ENCODE measurements at regions of chr11 and their contacts with region 1.

Region 1: GRCh38 chr11:15300341-15300740 is 185.6 kb downstream of the INSC start:
- DNase-seq: no peak
- H3K4me3 ChIP-seq: no peak overlapping the region
- H3K27ac ChIP-seq: no peak overlapping the region
- H3K4me1 ChIP-seq: no peaks in the 10 kb centered on the region
- H3K27me3 ChIP-seq: no peaks in the 10 kb centered on the region
- CTCF ChIP-seq: no peak
- POLR2A ChIP-seq: no peak

Region 2: GRCh38 chr11:15199693-15200092 is 100.6 kb before region 1 on chr11:
- intact Hi-C with region 1: no loop called
- DNase-seq: no peak
- H3K4me3 ChIP-seq: no peak overlapping the region
- H3K27ac ChIP-seq: no peak overlapping the region
- H3K4me1 ChIP-seq: no peaks in the 10 kb centered on the region
- H3K27me3 ChIP-seq: no peaks in the 10 kb centered on the region
- CTCF ChIP-seq: no peak
- POLR2A ChIP-seq: no peak

Region 3: GRCh38 chr11:15497366-15497765 is 197.0 kb after region 1 on chr11:
- intact Hi-C with region 1: no loop called
- DNase-seq: no peak
- H3K4me3 ChIP-seq: no peak overlapping the region
- H3K27ac ChIP-seq: no peak overlapping the region
- H3K4me1 ChIP-seq: no peaks in the 10 kb centered on the region
- H3K27me3 ChIP-seq: no peaks in the 10 kb centered on the region
- CTCF ChIP-seq: no peak
- POLR2A ChIP-seq: no peak

Region 4: DNA sequence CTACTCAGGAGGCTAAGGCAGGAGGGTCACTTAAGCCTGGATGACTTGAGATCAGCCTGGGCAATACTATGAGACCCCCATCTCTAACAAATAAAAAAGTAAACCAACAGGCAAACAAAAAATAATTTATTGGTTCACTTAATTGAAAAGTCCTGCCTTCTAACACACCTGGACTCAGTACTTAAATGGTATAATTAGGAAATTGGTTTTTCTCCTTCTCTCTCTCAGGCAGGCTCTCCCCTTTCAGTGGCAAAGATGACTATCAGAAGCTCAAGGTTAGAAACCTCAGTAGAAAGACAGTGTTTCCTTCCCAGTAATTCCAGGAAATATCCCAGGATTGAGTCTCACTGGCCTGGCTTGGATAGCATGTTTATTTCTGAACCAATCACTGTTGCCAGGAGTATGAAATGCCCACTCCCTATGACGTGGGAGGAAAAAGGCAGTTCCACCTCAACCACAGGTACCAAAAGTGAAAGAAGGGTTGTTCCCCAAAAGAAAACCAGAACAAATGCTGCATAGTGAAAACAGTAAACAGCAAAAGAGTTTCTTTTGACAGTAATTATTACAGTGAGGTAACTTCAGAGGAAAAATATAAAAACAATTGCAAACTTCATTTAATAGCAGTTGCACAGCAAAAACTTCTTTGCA is 1112.3 kb after region 1 on chr11:
- intact Hi-C with region 1: loop called (anchors 5 kb)
- DNase-seq: no peak
- H3K4me3 ChIP-seq: no peak overlapping the region
- H3K27ac ChIP-seq: no peak overlapping the region
- H3K4me1 ChIP-seq: no peaks in the 10 kb centered on the region
- H3K27me3 ChIP-seq: no peaks in the 10 kb centered on the region
- CTCF ChIP-seq: no peak
- POLR2A ChIP-seq: no peak

Measured in vagina (tissue), 2 donors.